ENCODE measurements at regions of chr5 and their contacts with region 1.

Region 1: GRCh38 chr5:169577951-169578350 is 5.6 kb upstream of the SPDL1 start:
- DNase-seq: no peak
- ATAC-seq: no peak

Region 2: DNA sequence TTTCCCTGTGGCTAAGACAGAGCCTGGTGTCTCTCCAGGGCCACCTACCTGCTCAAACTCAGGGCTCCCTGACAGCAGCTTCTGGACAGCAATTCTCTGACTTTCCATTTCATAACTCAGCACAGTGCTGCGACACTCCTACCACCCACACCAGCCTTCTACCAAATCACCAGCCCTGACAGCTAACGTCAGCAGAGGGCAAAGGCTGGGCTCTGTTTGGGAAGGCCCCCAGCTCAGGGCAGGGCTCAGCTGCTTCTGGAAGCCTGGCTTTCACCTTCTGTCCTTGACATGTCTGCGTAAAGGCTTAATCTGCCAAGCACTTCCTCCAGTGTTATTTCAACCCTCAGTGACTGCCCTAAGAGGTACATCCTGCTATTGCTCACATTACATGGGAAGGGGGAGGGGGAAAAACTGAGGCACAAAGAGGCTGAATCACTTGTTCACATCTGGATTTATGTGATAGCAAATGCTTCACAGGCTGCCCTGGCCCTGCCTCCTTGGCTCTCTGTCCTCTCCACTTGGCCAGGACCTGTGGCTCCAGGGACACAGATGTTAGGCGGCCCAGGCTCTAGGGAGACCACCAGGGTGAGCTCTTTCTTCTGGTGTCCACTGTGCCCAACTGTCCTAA is 896.3 kb before region 1 on chr5:
- intact Hi-C with region 1: loop called (anchors 10 kb)
- DNase-seq: peak; percentile 52
- ATAC-seq: peak; percentile 82